SK-N-SH (cell line): ENCODE measurements at regions of chr13 and their contacts with region 1.

Region 1: GRCh38 chr13:67224148-67224846 is 5.8 kb downstream of the PCDH9 start:
- DNase-seq: peak; percentile 62
- H3K4me3 ChIP-seq: 0 out of 4 replicates have a peak overlapping the region, but pooled peaks of 1 of the 2 experiments have one; percentile 2
- H3K27ac ChIP-seq: peak overlapping the region in 1 of 2 experiments; percentile 18; a peak in 2 of 4 replicates
- H3K4me1 ChIP-seq: peaks cover 6 to 11% of the 10 kb centered on the region in 2 experiments; a peak in 3 of 4 replicates
- H3K27me3 ChIP-seq: no peaks in the 10 kb centered on the region
- CTCF ChIP-seq: peak; percentile 77
- EP300 ChIP-seq: peak in 1 of 2 experiments; percentile 47; a peak in 1 of 4 replicates
- RAD21 ChIP-seq: peak; percentile 96

Region 2: GRCh38 chr13:66618702-66619101 is 605.6 kb before region 1 on chr13:
- CTCF ChIA-PET with region 1: interaction called, 10 read pairs
- POLR2A ChIA-PET with region 1: no interaction called
- DNase-seq: peak; percentile 48
- H3K4me3 ChIP-seq: no peak overlapping the region
- H3K27ac ChIP-seq: no peak overlapping the region
- H3K4me1 ChIP-seq: no peaks in the 10 kb centered on the region
- H3K27me3 ChIP-seq: no peaks in the 10 kb centered on the region
- CTCF ChIP-seq: peak; percentile 60
- EP300 ChIP-seq: no peak
- RAD21 ChIP-seq: peak; percentile 63

Region 3: DNA sequence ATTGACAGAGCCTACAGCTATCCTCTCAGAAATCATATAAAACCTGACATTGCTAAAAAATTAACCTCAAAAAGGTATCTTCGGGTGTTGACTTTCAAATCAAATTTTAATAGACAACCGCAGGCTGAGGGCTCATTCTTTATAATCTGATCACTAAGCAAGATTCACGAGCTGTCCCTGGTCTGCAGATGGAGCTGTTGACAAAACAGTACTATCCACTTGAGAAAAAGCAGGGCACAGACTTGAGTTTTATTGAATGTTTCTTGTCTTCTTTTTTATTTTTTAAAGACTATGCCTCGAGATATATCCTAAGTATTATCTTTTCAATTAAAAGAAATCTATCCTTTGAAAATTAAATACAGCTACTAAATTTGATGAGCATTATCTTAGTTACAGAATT is 534.7 kb before region 1 on chr13:
- CTCF ChIA-PET with region 1: interaction called, 52 read pairs
- POLR2A ChIA-PET with region 1: no interaction called
- DNase-seq: peak; percentile 30
- H3K4me3 ChIP-seq: no peak overlapping the region
- H3K27ac ChIP-seq: no peak overlapping the region
- H3K4me1 ChIP-seq: no peaks in the 10 kb centered on the region; a peak in 1 of 4 replicates
- H3K27me3 ChIP-seq: no peaks in the 10 kb centered on the region
- CTCF ChIP-seq: peak; percentile 32; the same call in 1 of the 2 replicates
- EP300 ChIP-seq: no peak
- RAD21 ChIP-seq: peak; percentile 83

Region 4: GRCh38 chr13:67238277-67238859 is 14.1 kb after region 1 on chr13:
- CTCF ChIA-PET with region 1: interaction called, 11 read pairs
- POLR2A ChIA-PET with region 1: no interaction called
- DNase-seq: peak; percentile 19
- H3K4me3 ChIP-seq: no peak overlapping the region; a peak in 1 of 4 replicates
- H3K27ac ChIP-seq: no peak overlapping the region
- H3K4me1 ChIP-seq: peaks cover 0 to 12% of the 10 kb centered on the region in 2 experiments; a peak in 1 of 4 replicates
- H3K27me3 ChIP-seq: no peaks in the 10 kb centered on the region
- CTCF ChIP-seq: peak; percentile 82
- EP300 ChIP-seq: no peak
- RAD21 ChIP-seq: peak; percentile 81

Region 5: GRCh38 chr13:67366533-67366932 is 142.2 kb after region 1 on chr13:
- CTCF ChIA-PET with region 1: no interaction called
- POLR2A ChIA-PET with region 1: no interaction called
- DNase-seq: no peak
- H3K4me3 ChIP-seq: no peak overlapping the region
- H3K27ac ChIP-seq: no peak overlapping the region
- H3K4me1 ChIP-seq: no peaks in the 10 kb centered on the region; a peak in 1 of 4 replicates
- H3K27me3 ChIP-seq: no peaks in the 10 kb centered on the region
- CTCF ChIP-seq: peak; percentile 45
- EP300 ChIP-seq: no peak
- RAD21 ChIP-seq: peak; percentile 6; the same call in 1 of the 2 replicates